ENCODE measurements at regions of chr2 and their contacts with region 1.

Region 1: GRCh38 chr2:72263776-72264060 is 116.1 kb upstream of the CYP26B1 start:
- DNase-seq: no peak
- H3K4me3 ChIP-seq: no peak overlapping the region
- H3K27ac ChIP-seq: no peak overlapping the region
- H3K4me1 ChIP-seq: no peaks in the 10 kb centered on the region
- H3K27me3 ChIP-seq: no peaks in the 10 kb centered on the region
- CTCF ChIP-seq: no peak
- POLR2A ChIP-seq: no peak

Region 2: GRCh38 chr2:72300147-72300684 is 36.5 kb after region 1 on chr2:
- intact Hi-C with region 1: loop called (anchors 1 kb)
- DNase-seq: no peak
- H3K4me3 ChIP-seq: no peak overlapping the region
- H3K27ac ChIP-seq: no peak overlapping the region
- H3K4me1 ChIP-seq: no peaks in the 10 kb centered on the region
- H3K27me3 ChIP-seq: no peaks in the 10 kb centered on the region
- CTCF ChIP-seq: no peak
- POLR2A ChIP-seq: no peak